ENCODE measurements at regions of chr2 and their contacts with region 1.

Region 1: GRCh38 chr2:55050133-55050994 is at the start of gene RTN4:
- DNase-seq: peak; percentile 99
- H3K4me3 Mint-ChIP-seq: peak within 1 kb of the TSS; percentile 97
- H3K27ac Mint-ChIP-seq: peak within 1 kb of the TSS; percentile 97
- H3K4me1 Mint-ChIP-seq: peaks cover 48% of the 10 kb centered on the region
- H3K27me3 Mint-ChIP-seq: no peaks in the 10 kb centered on the region
- total RNA-seq, gene RTN4: 86.9 and 90.1 TPM in 2 replicates

Region 2: DNA sequence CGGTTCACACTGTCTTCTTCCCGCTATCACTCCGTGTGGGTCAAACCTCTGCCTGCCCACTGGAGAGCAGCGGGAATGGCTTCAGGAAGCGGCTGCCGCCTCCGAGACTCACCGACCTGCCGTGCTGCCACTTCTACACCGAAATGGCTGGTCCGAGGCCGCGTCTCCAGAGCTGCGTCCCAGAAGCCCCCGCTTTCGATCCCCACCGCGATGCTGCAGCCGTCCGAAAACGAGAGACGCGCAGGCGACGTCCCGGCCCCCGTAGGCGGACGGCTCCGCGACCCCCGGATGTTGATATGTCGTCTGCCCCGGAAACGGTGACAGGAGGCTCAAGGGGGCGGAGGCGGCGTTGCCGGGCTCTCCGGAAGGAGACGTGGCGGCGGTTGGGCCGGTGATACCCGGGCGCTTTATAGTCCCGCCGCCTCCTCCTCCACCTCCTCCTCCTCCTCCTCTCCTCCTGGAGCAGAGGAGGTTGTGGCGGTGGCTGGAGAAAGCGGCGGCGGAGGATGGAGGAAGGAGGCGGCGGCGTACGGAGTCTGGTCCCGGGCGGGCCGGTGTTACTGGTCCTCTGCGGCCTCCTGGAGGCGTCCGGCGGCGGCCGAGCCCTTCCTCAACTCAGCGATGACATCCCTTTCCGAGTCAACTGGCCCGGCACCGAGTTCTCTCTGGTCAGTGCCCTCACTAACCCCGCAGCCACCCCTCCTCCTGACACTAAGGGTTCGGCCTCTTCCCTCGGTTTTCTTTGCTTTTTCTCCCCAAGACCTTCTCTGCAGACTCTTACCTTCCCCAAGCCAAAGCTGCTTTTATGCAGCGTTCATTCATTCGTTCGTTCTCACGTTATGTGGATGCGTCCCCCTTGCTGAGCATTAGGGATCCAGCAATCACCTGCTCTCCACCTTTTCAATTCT is 1263.4 kb before region 1 on chr2 and contains the starts of genes ASB3 and ERLEC1:
- intact Hi-C with region 1: loop called (anchors 2 kb)
- DNase-seq: peak; percentile 97
- H3K4me3 Mint-ChIP-seq: peak within 1 kb of the TSS; percentile 97
- H3K27ac Mint-ChIP-seq: peak within 1 kb of the TSS; percentile 96
- H3K4me1 Mint-ChIP-seq: peaks cover 30% of the 10 kb centered on the region
- H3K27me3 Mint-ChIP-seq: no peaks in the 10 kb centered on the region
- total RNA-seq, gene ASB3: 19.6 and 24.0 TPM in 2 replicates
- total RNA-seq, gene ERLEC1: 24.1 and 24.9 TPM in 2 replicates

Region 3: DNA sequence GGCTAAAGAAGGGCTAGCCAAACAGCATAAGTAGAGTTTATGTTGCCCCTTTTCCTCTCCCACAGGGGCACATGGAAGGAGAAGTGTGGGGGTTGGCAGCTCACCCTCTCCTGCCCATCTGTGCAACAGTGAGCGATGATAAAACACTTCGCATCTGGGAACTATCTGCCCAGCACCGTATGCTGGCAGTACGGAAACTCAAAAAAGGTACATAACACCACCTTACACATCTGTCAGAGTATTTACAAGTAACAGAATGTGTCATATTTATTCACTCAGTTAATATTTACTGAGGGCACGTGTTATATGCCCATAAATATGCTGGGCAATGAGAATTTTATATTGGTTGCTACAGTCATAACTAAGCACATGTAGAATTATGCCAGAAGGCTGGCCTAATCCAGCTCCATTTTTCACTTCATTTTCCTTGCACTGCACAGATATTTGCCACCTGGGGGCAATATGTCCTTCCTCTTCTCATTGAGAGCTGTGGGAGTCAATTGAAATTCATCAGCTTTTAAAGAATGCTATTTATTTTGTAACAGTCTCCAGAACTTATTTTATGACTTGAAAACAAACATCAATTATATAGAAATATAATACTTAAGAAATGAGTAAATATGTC is 150.7 kb before region 1 on chr2:
- intact Hi-C with region 1: loop called (anchors 5 kb)
- DNase-seq: no peak
- H3K4me3 Mint-ChIP-seq: no peak overlapping the region
- H3K27ac Mint-ChIP-seq: no peak overlapping the region
- H3K4me1 Mint-ChIP-seq: peaks cover 28% of the 10 kb centered on the region
- H3K27me3 Mint-ChIP-seq: no peaks in the 10 kb centered on the region

Region 4: DNA sequence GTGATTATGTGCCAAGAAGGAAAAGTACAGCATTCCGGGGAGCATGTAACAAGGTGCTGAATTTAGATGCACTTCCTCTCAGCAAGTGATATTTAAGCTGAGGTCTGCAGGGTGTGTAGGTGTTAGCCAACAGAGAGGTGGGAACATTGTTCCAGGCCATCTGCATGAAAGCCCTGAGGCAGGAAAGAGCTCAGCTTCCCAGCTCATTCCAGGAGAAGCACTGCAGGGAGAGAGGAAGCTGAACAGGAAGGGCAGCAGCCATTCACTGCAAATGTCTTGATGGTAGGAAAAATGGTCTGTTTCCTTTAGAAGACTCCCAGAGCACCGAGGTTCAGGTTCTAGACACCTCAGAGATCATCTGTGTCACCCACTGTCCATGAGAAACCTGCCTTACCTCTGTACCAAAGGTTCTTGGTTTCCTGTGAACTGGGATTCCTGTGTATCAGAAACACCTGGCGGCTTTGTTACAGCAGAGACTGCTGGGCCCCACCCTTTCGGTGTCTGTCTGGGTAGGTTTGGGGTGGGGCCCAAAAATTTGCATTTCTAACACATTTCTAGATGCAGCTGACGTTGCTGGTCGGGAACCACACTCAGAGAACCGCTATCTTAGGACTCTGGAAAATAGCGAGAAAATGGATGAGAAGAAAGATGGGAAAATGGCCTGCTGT is 84.1 kb before region 1 on chr2:
- intact Hi-C with region 1: no loop called
- DNase-seq: peak; percentile 52
- H3K4me3 Mint-ChIP-seq: no peak overlapping the region
- H3K27ac Mint-ChIP-seq: no peak overlapping the region
- H3K4me1 Mint-ChIP-seq: peaks cover 24% of the 10 kb centered on the region
- H3K27me3 Mint-ChIP-seq: no peaks in the 10 kb centered on the region

Region 5: DNA sequence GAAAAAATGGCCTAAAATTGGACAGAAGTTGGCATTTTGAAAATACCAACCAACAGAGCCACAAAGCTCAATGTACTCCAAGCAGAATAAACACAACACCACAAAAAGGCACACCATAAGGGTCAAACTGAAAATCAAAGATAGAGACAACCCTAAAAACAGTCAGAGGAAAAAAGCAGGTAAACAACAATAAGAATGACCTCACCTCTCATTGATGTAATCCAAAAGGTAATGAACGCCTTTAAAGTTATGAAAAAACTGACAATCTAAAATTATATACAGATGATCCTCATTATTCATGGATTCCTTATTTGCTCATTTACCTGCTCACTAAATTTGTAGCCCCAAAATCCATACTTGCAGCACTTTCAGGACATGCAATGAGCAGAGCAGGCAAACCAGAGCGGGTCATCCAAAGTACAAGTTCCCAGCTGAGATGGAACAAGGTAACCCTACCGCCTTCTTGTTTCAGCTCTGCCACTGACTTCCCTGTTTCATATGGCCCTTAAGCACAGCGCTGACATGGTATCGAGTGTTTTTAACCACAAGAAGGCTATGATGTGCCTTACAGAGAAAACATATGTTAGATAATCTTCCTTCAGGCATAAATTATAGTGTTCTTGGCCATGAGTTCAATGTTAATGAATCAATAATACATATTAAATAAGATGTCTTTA is 17.2 kb before region 1 on chr2:
- intact Hi-C with region 1: loop called (anchors 2 kb)
- DNase-seq: peak; percentile 63
- H3K4me3 Mint-ChIP-seq: no peak overlapping the region
- H3K27ac Mint-ChIP-seq: no peak overlapping the region
- H3K4me1 Mint-ChIP-seq: peaks cover 36% of the 10 kb centered on the region
- H3K27me3 Mint-ChIP-seq: no peaks in the 10 kb centered on the region

Region 6: DNA sequence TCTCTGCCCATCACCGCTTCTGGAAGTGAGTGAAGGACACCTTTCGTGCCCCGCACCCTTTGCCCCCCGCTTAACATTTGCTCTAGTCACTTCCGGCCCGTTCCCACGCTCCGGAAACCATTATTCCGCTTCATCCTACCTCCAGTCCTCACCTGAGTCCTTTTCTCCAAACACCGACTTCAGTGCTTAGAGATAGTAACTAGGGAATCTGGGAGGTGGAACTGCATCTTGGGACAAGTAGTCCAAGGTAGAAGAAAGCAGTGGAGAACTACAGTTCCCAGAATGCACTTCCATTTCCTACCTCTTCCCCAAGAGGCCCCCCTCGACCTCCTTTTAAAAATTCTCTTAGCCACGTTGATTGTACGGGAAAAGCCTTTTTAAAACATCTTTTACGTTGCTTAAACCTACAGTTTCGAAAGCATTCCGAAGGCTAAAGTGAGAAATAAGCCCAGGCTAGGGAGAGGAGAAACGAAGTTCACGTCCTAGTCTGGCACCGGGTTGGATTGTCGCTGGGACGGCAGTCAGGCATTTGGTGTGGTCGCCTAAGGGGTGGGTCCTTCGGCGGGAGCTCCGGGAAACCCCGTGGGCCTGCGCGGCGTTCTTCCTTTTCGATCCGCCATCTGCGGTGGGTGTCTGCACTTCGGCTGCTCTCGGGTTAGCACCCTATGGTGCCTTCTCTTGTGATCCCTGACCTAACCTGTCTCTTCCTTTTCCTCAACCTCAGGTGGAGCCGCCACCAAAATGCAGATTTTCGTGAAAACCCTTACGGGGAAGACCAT is 181.9 kb after region 1 on chr2 and contains the starts of genes CLHC1 and RPS27A:
- intact Hi-C with region 1: loop called (anchors 1 kb)
- DNase-seq: peak; percentile 98
- H3K4me3 Mint-ChIP-seq: peak within 1 kb of the TSS; percentile 91
- H3K27ac Mint-ChIP-seq: peak within 1 kb of the TSS; percentile 95
- H3K4me1 Mint-ChIP-seq: peaks cover 50% of the 10 kb centered on the region
- H3K27me3 Mint-ChIP-seq: no peaks in the 10 kb centered on the region
- total RNA-seq, gene CLHC1: 7.3 and 10.1 TPM in 2 replicates
- total RNA-seq, gene RPS27A: 1,064 and 1,070 TPM in 2 replicates

Region 7: GRCh38 chr2:55419679-55420438 is 369.5 kb after region 1 on chr2 and contains the start of gene CCDC88A:
- intact Hi-C with region 1: loop called (anchors 5 kb)
- DNase-seq: peak; percentile 95
- H3K4me3 Mint-ChIP-seq: peak within 1 kb of the TSS; percentile 90
- H3K27ac Mint-ChIP-seq: peak within 1 kb of the TSS; percentile 70
- H3K4me1 Mint-ChIP-seq: peaks cover 17% of the 10 kb centered on the region
- H3K27me3 Mint-ChIP-seq: peaks cover 37% of the 10 kb centered on the region
- total RNA-seq, gene CCDC88A: 9.5 and 9.8 TPM in 2 replicates